Dendritic cell treated with granulocyte-macrophage colony-stimulating factor and Interleukin-4, amounts not matched to agents 40 ng/mL and 50 ng/mL, for 4 days (primary cell): ENCODE measurements at regions of chr2 and their contacts with region 1.

Region 1: GRCh38 chr2:181457121-181457740 is at the start of gene ITGA4:
- H3K4me3 Mint-ChIP-seq: peak within 1 kb of the TSS; percentile 91
- H3K27ac Mint-ChIP-seq: peak within 1 kb of the TSS; percentile 81
- H3K4me1 Mint-ChIP-seq: peaks cover 52% of the 10 kb centered on the region
- H3K27me3 Mint-ChIP-seq: no peaks in the 10 kb centered on the region

Region 2: DNA sequence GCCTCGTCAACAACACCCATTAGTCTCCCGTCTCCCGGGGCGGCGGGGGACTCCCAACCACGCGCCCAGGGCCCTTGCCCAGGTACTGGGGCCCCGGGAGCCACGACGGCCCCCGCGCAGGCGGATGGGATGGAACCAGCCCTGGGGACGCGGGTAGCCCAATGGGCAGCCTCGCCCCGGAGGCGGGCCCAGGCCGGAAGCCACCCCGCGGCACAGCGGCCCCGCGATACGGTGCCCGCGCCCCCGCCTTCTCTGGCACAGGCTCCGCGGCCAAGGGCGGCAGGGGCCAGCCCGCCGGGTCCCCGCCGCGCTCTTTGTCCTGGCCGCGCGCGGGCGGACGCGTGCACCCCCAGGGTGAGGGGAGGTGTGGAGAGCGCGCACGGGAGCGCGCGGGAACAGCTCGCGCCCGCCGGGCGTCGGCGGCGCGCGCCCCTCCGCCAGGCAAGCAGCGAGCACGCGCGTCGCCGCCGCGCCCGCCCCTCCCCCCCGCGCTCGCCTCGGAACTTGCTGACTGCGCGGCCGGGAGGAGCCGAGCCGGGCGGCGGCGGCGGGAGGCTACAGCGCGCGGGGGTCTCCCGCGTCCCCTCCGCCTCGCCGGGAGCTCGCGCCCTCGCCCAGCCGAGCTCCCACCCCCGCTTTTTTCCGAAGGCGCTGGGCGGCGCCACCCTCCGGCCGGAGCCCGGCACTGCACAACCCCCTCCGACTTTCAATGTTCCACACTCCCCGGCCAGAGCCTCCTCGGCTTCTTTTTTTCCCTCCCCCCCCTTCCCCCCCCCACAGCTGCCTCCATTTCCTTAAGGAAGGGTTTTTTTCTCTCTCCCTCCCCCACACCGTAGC is 476.9 kb before region 1 on chr2 and contains the start of gene UBE2E3:
- intact Hi-C with region 1: loop called (anchors 5 kb)
- H3K4me3 Mint-ChIP-seq: peak within 1 kb of the TSS; percentile 96
- H3K27ac Mint-ChIP-seq: peak within 1 kb of the TSS; percentile 95
- H3K4me1 Mint-ChIP-seq: peaks cover 28% of the 10 kb centered on the region
- H3K27me3 Mint-ChIP-seq: peaks cover 6% of the 10 kb centered on the region

Region 3: DNA sequence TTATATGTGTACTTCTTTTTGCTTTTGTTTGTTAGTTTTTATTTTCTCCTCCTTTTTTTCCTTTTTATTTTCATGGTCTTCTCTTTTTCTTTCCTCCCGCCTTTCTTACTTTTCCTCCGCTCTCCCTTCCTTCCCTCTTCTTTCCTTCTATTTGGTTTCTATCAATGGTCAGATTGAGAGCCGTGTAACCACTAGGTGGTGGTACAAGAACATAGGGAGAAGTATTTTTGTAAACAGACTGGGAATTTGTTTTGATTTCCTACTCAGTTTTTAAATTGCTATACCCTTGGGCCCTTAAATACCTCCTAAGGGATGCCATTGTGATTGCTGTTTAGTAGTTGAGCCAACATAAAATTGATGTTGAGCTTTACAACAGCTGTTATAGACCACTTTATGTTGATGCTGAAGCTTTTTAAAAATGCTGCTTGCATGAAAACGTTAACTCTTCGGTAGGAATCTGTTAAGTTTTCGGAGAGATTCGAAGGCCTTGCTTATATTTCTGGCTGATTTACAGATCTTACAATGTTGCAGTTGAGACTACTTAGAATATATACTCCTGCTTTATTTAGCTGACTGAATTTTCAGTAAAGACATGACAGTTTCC is 352.6 kb before region 1 on chr2:
- intact Hi-C with region 1: loop called (anchors 2 kb)
- H3K4me3 Mint-ChIP-seq: no peak overlapping the region
- H3K27ac Mint-ChIP-seq: no peak overlapping the region
- H3K4me1 Mint-ChIP-seq: peaks cover 14% of the 10 kb centered on the region
- H3K27me3 Mint-ChIP-seq: no peaks in the 10 kb centered on the region

Region 4: GRCh38 chr2:181178823-181179412 is 278.3 kb before region 1 on chr2:
- intact Hi-C with region 1: loop called (anchors 5 kb)
- H3K4me3 Mint-ChIP-seq: no peak overlapping the region
- H3K27ac Mint-ChIP-seq: no peak overlapping the region
- H3K4me1 Mint-ChIP-seq: peaks cover 5% of the 10 kb centered on the region
- H3K27me3 Mint-ChIP-seq: no peaks in the 10 kb centered on the region

Region 5: DNA sequence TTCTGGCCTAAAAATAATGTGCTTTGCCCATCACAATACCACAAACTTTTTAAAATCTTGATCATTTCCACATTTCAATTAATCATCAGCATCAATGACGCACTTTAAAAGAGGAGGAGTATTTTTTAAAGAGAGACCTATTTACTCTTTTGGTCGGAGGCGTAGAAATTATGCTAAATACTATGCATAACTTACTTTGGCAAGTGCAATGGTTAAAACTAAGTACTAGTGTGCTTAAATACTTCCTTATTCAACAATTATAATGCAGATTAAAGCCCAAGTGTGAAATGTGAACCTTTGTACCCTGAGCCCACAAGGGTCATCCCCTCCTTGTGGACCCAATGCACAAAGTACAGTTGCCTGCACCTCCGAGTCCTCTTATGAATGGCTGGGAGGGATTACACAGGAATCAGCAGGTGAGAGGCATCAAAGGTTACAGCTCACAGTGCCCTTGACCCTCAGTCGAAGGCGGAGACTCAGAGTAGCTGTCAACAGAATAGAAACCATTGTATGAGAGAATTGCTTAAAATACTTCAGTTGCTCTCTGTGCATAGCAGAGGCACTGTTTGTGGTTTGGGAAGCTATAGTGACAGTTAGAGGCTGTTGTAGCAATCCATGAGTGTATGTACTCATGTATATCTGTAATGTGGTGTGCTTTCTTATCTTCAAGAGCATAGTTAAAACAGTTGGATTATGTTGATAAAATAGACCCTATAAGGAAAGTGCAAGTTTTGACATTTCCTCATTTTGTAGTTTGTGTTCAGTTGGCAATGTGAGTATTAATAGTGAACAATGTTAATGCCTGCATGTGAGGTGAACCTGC is 151.7 kb before region 1 on chr2:
- intact Hi-C with region 1: loop called (anchors 5 kb)
- H3K4me3 Mint-ChIP-seq: no peak overlapping the region
- H3K27ac Mint-ChIP-seq: peak overlapping the region; percentile 45
- H3K4me1 Mint-ChIP-seq: peaks cover 35% of the 10 kb centered on the region
- H3K27me3 Mint-ChIP-seq: no peaks in the 10 kb centered on the region

Region 6: GRCh38 chr2:181348107-181348837 is 109.0 kb before region 1 on chr2:
- intact Hi-C with region 1: no loop called
- H3K4me3 Mint-ChIP-seq: no peak overlapping the region
- H3K27ac Mint-ChIP-seq: no peak overlapping the region
- H3K4me1 Mint-ChIP-seq: peaks cover 20% of the 10 kb centered on the region
- H3K27me3 Mint-ChIP-seq: no peaks in the 10 kb centered on the region

Region 7: GRCh38 chr2:181393472-181393871 is 63.8 kb before region 1 on chr2:
- intact Hi-C with region 1: loop called (anchors 10 kb)
- H3K4me3 Mint-ChIP-seq: no peak overlapping the region
- H3K27ac Mint-ChIP-seq: peak overlapping the region; percentile 66
- H3K4me1 Mint-ChIP-seq: peaks cover 20% of the 10 kb centered on the region
- H3K27me3 Mint-ChIP-seq: no peaks in the 10 kb centered on the region

Region 8: DNA sequence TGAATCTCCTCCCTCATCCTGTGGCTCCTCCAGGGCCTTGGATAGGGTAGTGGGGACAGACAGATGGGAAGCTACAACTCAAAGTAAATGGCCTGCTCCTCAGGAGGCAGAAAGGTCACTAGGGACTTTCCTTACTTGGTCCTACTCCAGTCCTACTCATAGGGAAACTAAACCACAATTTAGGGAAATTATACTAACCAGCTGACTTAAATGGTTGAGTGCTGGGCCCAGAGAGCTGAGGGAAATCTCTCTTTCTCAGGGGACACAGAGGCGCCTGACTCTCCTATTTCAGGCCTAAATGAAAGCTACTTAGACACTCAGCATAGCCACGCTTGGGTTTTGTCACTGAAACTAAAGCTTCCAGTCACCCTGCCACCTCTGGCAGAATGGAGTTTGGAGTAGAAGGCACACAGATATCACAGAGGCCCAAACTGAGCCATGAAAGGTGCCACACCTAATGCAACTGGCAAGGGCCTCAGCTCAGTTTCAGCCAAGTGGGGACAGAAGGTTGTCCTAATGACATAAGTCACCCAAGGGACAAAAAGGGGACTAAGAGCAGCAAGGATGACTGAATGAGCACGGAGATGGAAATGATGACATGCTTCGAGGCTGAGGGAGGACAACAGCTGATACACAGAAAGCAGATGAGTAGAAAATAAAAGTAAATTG is 175.6 kb after region 1 on chr2:
- intact Hi-C with region 1: no loop called
- H3K4me3 Mint-ChIP-seq: no peak overlapping the region
- H3K27ac Mint-ChIP-seq: no peak overlapping the region
- H3K4me1 Mint-ChIP-seq: peaks cover 9% of the 10 kb centered on the region
- H3K27me3 Mint-ChIP-seq: no peaks in the 10 kb centered on the region

Region 9: DNA sequence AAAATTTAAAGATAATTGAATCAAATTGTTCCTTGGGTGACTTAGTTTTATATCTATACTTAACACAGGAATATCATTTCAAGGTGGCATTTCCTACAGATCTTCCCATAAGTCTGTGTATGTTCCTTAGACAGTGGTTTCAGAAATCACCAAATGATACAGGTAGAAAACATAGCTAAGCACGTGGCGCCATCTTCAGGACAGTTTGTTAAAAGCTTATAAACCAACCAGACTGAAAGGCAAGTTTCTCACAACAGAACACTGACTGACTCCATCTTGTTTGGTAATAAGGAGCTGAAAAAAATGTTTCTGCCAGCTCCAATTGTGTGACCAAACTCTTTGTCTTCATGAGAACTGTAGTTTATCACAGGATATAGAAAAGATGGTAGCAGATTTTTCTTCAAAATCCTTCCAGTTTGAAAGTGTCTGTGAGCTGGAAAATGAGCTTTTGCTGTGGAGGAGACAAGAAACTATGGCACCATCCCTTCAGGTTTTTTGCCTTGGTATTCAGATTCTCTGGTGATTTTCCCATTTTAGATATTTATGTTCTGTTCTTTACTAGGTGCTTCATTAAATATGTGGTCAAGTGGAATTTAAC is 257.9 kb after region 1 on chr2:
- intact Hi-C with region 1: loop called (anchors 5 kb)
- H3K4me3 Mint-ChIP-seq: no peak overlapping the region
- H3K27ac Mint-ChIP-seq: no peak overlapping the region
- H3K4me1 Mint-ChIP-seq: no peaks in the 10 kb centered on the region
- H3K27me3 Mint-ChIP-seq: no peaks in the 10 kb centered on the region

Region 10: GRCh38 chr2:182049372-182050148 is 592.3 kb after region 1 on chr2:
- intact Hi-C with region 1: no loop called
- H3K4me3 Mint-ChIP-seq: no peak overlapping the region
- H3K27ac Mint-ChIP-seq: no peak overlapping the region
- H3K4me1 Mint-ChIP-seq: no peaks in the 10 kb centered on the region
- H3K27me3 Mint-ChIP-seq: no peaks in the 10 kb centered on the region